ENCODE measurements at regions of chr6 and their contacts with region 1.

Region 1: DNA sequence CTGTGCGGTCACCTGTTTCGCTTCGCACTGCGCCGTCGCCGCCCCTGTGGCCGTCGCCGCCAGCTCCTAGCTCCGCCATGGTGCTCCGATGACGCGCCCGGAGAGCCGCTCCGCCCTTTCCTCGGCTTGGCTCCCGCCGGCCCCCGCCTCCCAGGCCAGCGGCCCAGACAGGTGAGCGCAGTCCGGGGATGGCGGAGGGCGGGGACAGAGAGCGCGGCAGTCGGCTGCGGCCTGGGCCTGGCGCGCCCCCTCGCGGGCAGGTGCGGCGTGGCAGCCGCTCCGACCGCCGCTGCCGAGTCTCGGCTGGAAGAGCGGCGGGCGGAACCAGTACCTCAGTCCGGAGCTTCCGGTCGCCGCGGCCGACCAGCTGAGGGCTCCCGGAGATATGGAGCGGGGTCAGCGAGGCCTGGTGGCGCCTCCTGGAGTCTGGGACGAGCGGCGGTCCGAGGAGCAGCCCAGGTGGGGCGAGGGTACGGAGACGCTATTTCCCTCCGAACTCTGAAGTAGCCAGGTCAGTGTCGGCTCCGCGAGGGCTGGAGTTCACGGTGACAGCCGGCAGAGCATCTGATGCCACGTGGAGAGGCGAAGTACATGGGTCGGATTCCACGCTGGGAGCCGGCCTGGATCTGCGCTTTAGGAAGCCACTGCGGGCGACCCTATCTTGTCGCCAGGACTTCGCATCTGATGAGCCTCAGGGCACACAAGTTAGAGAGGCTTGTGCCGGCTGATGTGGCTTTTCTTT is at the start of gene MAP7:
- DNase-seq: peak; percentile 36 to 78 (median 52)
- ATAC-seq: peak; percentile 52 to 86 (median 83)
- H3K4me3 ChIP-seq: peak within 1 kb of the TSS; percentile 43 to 91 (median 81)
- H3K27ac ChIP-seq: peak within 1 kb of the TSS in 2 of 12 donors; percentile 24 to 25
- H3K4me1 ChIP-seq: peaks cover 0 to 22% (median 14%) of the 10 kb centered on the region in 12 donors
- H3K27me3 ChIP-seq: peaks cover 0 to 46% (median 6%) of the 10 kb centered on the region in 9 donors
- CTCF ChIP-seq: peak; percentile 58 to 93 (median 78)
- POLR2A ChIP-seq: no peak
- total RNA-seq, gene MAP7: 1.0 to 3.2 (median 2.5) TPM

Region 2: DNA sequence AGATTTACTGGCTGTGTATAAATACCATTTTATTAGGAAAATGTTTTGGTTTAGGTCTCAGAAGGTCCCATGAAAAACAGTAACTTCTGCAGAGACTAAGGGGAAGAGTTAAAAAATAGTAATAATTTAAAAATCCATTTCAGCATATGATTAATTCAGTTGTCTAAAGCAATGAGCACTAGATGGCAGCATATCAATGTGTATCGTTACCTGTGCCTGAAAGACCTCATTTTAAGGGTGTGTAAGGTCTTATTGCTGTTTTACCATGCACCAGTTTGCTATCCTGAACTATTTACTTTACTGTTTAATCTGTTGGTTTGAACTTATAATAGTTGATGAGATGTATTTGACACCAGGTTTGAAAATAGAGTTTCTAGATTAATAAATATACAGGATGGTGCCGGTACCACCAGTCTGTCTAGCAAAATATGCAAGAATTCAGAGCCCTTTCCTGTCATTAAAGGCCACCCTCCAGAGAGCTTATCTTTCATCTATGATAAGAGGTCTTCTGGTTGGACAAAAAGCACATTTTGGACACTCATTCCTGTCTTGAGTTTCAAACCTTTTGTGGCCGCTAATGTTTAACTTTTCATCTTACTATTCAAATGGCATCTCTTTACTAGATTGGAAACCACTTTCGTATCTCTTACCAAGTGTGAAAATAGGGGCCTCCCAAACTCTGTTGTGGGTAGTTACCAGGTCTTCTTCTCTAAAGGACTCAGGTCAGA is 1044.1 kb before region 1 on chr6:
- intact Hi-C with region 1: loop called in 3 of 10 experiments (anchors 10 kb)
- DNase-seq: no peak
- ATAC-seq: peak in 1 of 4 donors; percentile 46
- H3K4me3 ChIP-seq: no peak overlapping the region
- H3K27ac ChIP-seq: no peak overlapping the region
- H3K4me1 ChIP-seq: no peaks in the 10 kb centered on the region
- H3K27me3 ChIP-seq: no peaks in the 10 kb centered on the region
- CTCF ChIP-seq: peak; percentile 44 to 74 (median 59)
- POLR2A ChIP-seq: no peak

Region 3: GRCh38 chr6:136927292-136927691 is 376.8 kb after region 1 on chr6:
- intact Hi-C with region 1: no loop called
- DNase-seq: no peak
- ATAC-seq: peak in 3 of 4 donors; percentile 10 to 33 (median 28)
- H3K4me3 ChIP-seq: no peak overlapping the region
- H3K27ac ChIP-seq: no peak overlapping the region
- H3K4me1 ChIP-seq: peaks cover 0 to 15% (median 6%) of the 10 kb centered on the region in 12 donors
- H3K27me3 ChIP-seq: peaks cover 0 to 28% (median 17%) of the 10 kb centered on the region in 9 donors
- CTCF ChIP-seq: peak in 7 of 12 donors; percentile 14 to 43 (median 27)
- POLR2A ChIP-seq: no peak

Measured in heart left ventricle (tissue), 16 donors.